CD4-positive, alpha-beta T cell (primary cell): ENCODE measurements at regions of chr19 and their contacts with region 1.

Region 1: DNA sequence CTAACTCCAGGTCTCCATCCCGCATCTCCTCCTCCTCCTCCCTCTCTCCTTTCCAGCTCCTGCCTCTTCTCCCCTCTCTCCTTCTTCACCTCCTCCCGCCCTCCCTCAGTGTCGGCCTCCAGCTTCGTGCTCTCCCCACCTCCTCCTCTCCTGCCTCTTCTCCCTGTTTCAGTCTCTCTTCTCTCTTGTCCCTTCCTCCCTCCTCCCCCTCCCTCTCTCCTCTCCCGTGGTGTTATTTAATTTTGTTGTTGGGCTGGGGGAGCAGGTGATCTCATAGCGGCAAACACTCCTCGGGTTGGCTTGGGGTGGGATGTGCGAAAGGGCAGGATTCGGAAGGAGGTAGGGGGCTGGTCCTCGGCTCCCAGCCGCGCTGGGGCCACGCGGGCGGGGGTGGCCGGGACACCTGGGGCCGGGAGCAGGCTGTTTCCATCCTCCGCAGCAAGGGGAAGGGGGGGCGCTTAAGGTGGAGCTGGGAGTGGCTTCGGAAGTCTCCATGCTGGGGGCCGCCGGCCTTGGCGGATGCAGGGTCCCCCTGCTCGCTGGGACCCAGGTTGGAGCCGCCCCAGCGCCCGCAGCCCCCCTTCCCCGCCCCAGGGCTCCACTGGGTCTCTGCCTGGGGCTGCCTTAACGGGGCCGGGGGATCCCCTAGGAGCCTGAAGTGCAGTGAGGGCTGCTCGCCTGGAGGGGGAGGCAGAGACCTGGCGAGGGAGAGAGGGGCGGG is at the start of gene CA11:
- DNase-seq: peak; percentile 88 to 96 (median 92)
- ATAC-seq: peak; percentile 80
- H3K4me3 ChIP-seq: peak within 1 kb of the TSS; percentile 71
- H3K4me3 Mint-ChIP-seq: peak within 1 kb of the TSS; percentile 85
- H3K27ac ChIP-seq: peak within 1 kb of the TSS; percentile 78 to 96
- H3K27ac Mint-ChIP-seq: peak within 1 kb of the TSS; percentile 91
- H3K4me1 ChIP-seq: peaks cover 48% of the 10 kb centered on the region
- H3K4me1 Mint-ChIP-seq: peaks cover 54% of the 10 kb centered on the region
- H3K27me3 ChIP-seq: no peaks in the 10 kb centered on the region
- H3K27me3 Mint-ChIP-seq: no peaks in the 10 kb centered on the region
- CTCF ChIP-seq: peak; percentile 84
- total RNA-seq, gene CA11: 11.0 to 12.4 TPM

Region 2: GRCh38 chr19:48351341-48351752 is 294.8 kb before region 1 on chr19:
- CTCF ChIA-PET with region 1: no interaction called
- POLR2A ChIA-PET with region 1: no interaction called
- intact Hi-C with region 1: no loop called
- DNase-seq: peak; percentile 66 to 86 (median 76)
- ATAC-seq: peak; percentile 89
- H3K4me3 ChIP-seq: no peak overlapping the region
- H3K4me3 Mint-ChIP-seq: no peak overlapping the region
- H3K27ac ChIP-seq: no peak overlapping the region
- H3K27ac Mint-ChIP-seq: no peak overlapping the region
- H3K4me1 ChIP-seq: peaks cover 5% of the 10 kb centered on the region
- H3K4me1 Mint-ChIP-seq: peaks cover 6% of the 10 kb centered on the region
- H3K27me3 ChIP-seq: no peaks in the 10 kb centered on the region
- H3K27me3 Mint-ChIP-seq: no peaks in the 10 kb centered on the region
- CTCF ChIP-seq: peak; percentile 78

Region 3: GRCh38 chr19:48595171-48595570 is 51.0 kb before region 1 on chr19:
- CTCF ChIA-PET with region 1: no interaction called
- POLR2A ChIA-PET with region 1: no interaction called
- intact Hi-C with region 1: no loop called
- DNase-seq: no peak
- ATAC-seq: no peak
- H3K4me3 ChIP-seq: no peak overlapping the region
- H3K4me3 Mint-ChIP-seq: peak overlapping the region; percentile 71
- H3K27ac ChIP-seq: no peak overlapping the region
- H3K27ac Mint-ChIP-seq: peak overlapping the region; percentile 88
- H3K4me1 ChIP-seq: peaks cover 35% of the 10 kb centered on the region
- H3K4me1 Mint-ChIP-seq: peaks cover 10% of the 10 kb centered on the region
- H3K27me3 ChIP-seq: no peaks in the 10 kb centered on the region
- H3K27me3 Mint-ChIP-seq: no peaks in the 10 kb centered on the region
- CTCF ChIP-seq: no peak

Region 4: GRCh38 chr19:48618916-48619691 is 27.1 kb before region 1 on chr19 and contains the starts of genes RPL18 and SPHK2:
- CTCF ChIA-PET with region 1: interaction called, 3 read pairs
- POLR2A ChIA-PET with region 1: interaction called, 26 read pairs
- intact Hi-C with region 1: no loop called
- DNase-seq: peak; percentile 89 to 99 (median 95)
- ATAC-seq: peak; percentile 67
- H3K4me3 ChIP-seq: peak within 1 kb of the TSS; percentile 94
- H3K4me3 Mint-ChIP-seq: peak within 1 kb of the TSS; percentile 98
- H3K27ac ChIP-seq: peak within 1 kb of the TSS; percentile 76 to 89
- H3K27ac Mint-ChIP-seq: peak within 1 kb of the TSS; percentile 97
- H3K4me1 ChIP-seq: peaks cover 64% of the 10 kb centered on the region
- H3K4me1 Mint-ChIP-seq: peaks cover 58% of the 10 kb centered on the region
- H3K27me3 ChIP-seq: no peaks in the 10 kb centered on the region
- H3K27me3 Mint-ChIP-seq: no peaks in the 10 kb centered on the region
- CTCF ChIP-seq: no peak
- total RNA-seq, gene RPL18: 2,820 to 2,913 TPM
- total RNA-seq, gene SPHK2: 14.1 to 15.3 TPM

Region 5: GRCh38 chr19:48660854-48661731 is 14.9 kb after region 1 on chr19:
- CTCF ChIA-PET with region 1: interaction called, 4 read pairs
- POLR2A ChIA-PET with region 1: interaction called, 4 read pairs
- intact Hi-C with region 1: loop called (anchors 1 to 2 kb)
- DNase-seq: peak; percentile 60 to 92 (median 70)
- ATAC-seq: peak; percentile 91
- H3K4me3 ChIP-seq: peak overlapping the region; percentile 21
- H3K4me3 Mint-ChIP-seq: peak overlapping the region; percentile 73
- H3K27ac ChIP-seq: peak overlapping the region; percentile 42 to 46
- H3K27ac Mint-ChIP-seq: peak overlapping the region; percentile 82
- H3K4me1 ChIP-seq: peaks cover 16% of the 10 kb centered on the region
- H3K4me1 Mint-ChIP-seq: peaks cover 9% of the 10 kb centered on the region
- H3K27me3 ChIP-seq: no peaks in the 10 kb centered on the region
- H3K27me3 Mint-ChIP-seq: no peaks in the 10 kb centered on the region
- CTCF ChIP-seq: no peak

Region 6: DNA sequence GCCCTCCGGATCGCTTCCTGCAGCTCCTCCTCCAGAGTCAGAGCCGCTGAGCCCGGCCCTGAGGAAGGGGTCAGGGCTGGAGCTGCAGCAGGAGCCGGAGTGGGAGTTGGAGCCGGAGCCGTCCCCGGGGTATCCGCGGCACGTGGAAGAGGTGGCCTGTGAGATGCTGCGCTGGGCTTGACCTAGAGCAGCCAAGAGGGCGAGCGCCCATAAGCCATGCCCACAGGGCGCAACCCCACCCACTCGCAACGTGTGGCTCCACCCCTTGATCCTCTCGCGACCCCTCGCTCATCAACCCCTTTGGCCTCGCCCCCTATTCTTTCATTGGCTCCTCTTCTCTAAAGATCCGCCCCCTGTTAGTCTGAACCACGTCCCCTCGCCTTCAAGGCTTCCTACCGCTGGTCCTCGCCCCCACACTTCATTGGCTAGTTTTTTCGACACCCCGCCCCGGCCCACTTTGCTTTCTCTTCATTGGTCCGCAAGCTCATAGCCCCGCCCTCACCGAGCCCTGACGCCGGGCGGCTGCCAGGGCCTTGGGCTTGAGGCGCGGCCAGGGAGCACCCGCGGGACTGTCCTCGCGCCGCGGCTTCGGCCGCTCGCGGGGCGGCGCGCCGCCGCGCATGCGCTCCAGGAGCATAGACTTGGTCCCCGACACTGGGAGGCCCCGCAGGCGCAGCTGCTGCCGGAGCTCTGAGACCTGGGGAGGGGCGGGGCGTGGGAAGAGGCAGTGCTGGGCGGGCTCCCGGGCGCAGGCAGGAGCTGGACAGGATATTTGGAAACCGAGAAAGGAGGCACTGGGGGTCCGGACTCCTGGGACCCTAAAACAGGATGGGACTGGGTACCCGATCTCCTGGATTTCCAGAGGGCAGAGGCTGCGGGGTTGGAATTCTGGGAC is 68.0 kb after region 1 on chr19:
- CTCF ChIA-PET with region 1: no interaction called
- POLR2A ChIA-PET with region 1: interaction called, 10 read pairs
- intact Hi-C with region 1: loop called in 1 of 2 experiments (anchors 2 kb)
- DNase-seq: peak; percentile 94 to 99 (median 96)
- ATAC-seq: peak; percentile 93
- H3K4me3 ChIP-seq: peak overlapping the region; percentile 68
- H3K4me3 Mint-ChIP-seq: peak overlapping the region; percentile 88
- H3K27ac ChIP-seq: peak overlapping the region; percentile 23 to 41
- H3K27ac Mint-ChIP-seq: peak overlapping the region; percentile 50
- H3K4me1 ChIP-seq: peaks cover 25% of the 10 kb centered on the region
- H3K4me1 Mint-ChIP-seq: peaks cover 21% of the 10 kb centered on the region
- H3K27me3 ChIP-seq: no peaks in the 10 kb centered on the region
- H3K27me3 Mint-ChIP-seq: no peaks in the 10 kb centered on the region
- CTCF ChIP-seq: no peak

Region 7: DNA sequence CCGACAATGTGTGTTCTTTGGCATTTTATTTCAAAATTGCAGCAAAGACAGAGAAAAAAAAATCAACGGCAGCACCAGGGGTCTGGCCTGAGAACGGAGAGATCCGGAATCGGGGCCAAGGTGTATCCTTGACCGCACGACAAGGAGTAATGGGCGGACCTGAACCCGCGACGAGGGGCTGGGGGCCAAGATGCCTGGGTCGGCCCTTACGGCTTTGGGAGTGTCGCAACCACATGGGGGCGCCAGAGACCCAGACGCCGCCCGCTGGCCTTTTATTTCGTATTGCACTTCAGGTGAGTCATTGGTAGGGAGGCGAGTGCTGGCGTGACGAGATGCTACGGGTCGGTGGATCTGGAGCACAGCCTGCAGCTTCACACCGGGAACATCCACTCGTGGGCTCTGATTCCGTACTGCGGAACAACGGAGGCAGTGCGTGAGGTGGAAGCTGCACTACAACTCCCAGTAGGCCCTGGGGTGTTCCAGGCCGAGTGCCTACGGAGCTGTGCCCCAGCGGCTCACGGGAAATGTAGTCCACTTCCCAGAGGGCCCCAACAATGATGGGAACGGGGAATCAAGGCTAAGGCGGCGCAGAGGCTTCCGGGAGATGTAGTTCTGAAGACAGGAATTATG is 149.0 kb after region 1 on chr19:
- CTCF ChIA-PET with region 1: interaction called, 5 read pairs
- POLR2A ChIA-PET with region 1: interaction called, 5 read pairs
- intact Hi-C with region 1: loop called (anchors 2 kb)
- DNase-seq: peak; percentile 72 to 93 (median 76)
- ATAC-seq: peak; percentile 97
- H3K4me3 ChIP-seq: peak overlapping the region; percentile 59
- H3K4me3 Mint-ChIP-seq: peak overlapping the region; percentile 96
- H3K27ac ChIP-seq: peak overlapping the region in 1 of 2 donors; percentile 23
- H3K27ac Mint-ChIP-seq: peak overlapping the region; percentile 90
- H3K4me1 ChIP-seq: peaks cover 14% of the 10 kb centered on the region
- H3K4me1 Mint-ChIP-seq: peaks cover 10% of the 10 kb centered on the region
- H3K27me3 ChIP-seq: no peaks in the 10 kb centered on the region
- H3K27me3 Mint-ChIP-seq: no peaks in the 10 kb centered on the region
- CTCF ChIP-seq: peak; percentile 99

Region 8: GRCh38 chr19:48965040-48965805 is 319.1 kb after region 1 on chr19 and contains the start of gene FTL:
- CTCF ChIA-PET with region 1: no interaction called
- POLR2A ChIA-PET with region 1: interaction called, 3 read pairs
- intact Hi-C with region 1: loop called in 1 of 2 experiments (anchors 5 kb)
- DNase-seq: peak; percentile 71 to 94 (median 88)
- ATAC-seq: peak; percentile 78
- H3K4me3 ChIP-seq: peak within 1 kb of the TSS; percentile 85
- H3K4me3 Mint-ChIP-seq: peak within 1 kb of the TSS; percentile 97
- H3K27ac ChIP-seq: peak within 1 kb of the TSS; percentile 67 to 71
- H3K27ac Mint-ChIP-seq: peak within 1 kb of the TSS; percentile 97
- H3K4me1 ChIP-seq: peaks cover 55% of the 10 kb centered on the region
- H3K4me1 Mint-ChIP-seq: peaks cover 47% of the 10 kb centered on the region
- H3K27me3 ChIP-seq: peaks cover 0 to 2% of the 10 kb centered on the region in 2 experiments
- H3K27me3 Mint-ChIP-seq: no peaks in the 10 kb centered on the region
- CTCF ChIP-seq: no peak
- total RNA-seq, gene FTL: 616 to 627 TPM